ENCODE measurements at regions of chr9 and their contacts with region 1.

Region 1: GRCh38 chr9:121322037-121322775 is 47.8 kb downstream of the STOM start:
- DNase-seq: no peak
- ATAC-seq: no peak

Region 2: DNA sequence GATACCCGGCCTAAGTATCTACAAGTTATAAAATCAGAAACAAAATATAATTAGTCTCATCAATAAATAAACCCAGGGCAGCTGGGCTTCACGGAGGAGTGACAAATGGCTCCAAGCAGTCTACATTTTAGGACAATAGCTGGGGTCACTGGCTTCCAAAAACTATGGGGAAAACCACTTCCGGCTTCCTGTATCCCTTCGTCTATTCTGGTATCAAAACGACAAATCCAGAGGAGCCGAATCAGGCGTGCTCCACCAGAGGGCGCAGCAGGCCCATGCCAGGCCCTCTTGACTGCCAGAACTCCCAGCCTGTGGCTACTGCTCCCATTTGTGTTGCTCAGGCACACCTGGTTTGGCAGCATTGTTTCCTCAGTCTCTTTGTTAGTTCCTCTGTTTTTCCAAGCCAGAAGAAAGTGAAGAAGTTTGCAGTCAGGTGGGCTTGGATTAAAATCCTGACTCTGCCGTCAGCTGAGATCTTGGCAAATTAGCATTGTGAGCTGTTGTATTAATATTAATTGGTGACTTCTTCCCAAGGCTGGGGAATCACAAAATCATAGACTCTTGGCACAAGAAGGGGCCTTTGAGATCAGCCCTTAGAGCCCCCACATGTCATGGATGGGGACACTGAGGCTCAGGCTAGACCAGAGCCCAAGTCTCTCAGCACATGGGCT is 108.9 kb before region 1 on chr9:
- intact Hi-C with region 1: loop called (anchors 5 to 10 kb)
- DNase-seq: peak; percentile 89
- ATAC-seq: peak; percentile 95 to 97

Region 3: DNA sequence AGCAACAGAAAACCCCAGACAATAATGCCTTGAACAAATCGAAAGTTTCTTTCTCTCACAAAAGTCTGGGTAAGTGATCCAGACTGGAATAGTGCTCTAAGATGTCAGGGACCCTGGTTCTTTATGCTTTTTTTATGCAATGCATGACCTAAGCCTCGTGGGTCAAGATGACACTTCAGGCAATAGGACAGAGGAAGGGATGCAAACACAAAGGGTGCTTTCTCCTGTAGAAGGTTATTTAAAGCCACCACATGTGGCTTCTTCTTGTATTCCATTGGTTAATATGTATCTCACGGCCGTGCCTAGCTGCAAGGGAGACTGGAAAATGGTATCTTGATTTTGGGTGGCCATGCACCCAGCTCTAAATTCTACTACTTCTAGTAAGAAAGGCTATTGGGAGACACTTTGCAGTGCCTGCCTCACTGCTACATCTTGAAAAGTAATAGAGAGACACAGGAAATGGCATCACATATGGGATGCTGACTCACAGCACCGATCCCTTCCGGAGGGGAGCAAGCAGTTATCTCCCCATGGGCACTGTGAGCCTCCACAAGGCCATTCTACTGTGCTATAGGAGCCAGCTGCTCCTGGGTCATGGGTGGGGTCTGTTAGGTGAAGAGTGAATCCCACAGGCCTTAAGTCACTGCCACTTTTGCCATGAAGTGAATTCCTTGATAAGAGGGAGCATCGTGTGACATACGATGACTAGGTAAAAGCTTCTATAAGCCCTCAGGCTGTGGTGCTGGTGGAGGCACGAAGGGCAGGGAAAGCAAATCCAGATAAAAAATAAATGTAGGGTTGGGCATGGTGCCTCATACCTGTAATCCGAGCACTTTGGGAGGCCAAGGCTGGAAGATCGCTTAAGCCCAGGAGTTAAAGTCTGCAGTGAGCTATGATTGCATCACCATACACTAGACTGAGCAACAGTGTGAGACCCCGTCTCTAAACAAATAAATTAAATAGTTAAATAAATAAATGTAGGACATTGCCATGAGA is 88.0 kb before region 1 on chr9:
- intact Hi-C with region 1: loop called in 1 of 2 experiments (anchors 5 kb)
- DNase-seq: no peak
- ATAC-seq: no peak

Region 4: GRCh38 chr9:121286973-121287741 is 35.0 kb before region 1 on chr9:
- intact Hi-C with region 1: loop called in 1 of 2 experiments (anchors 5 kb)
- DNase-seq: peak; percentile 88
- ATAC-seq: peak; percentile 74 to 75

Region 5: GRCh38 chr9:121376214-121376830 is 54.1 kb after region 1 on chr9:
- intact Hi-C with region 1: loop called (anchors 2 to 5 kb)
- DNase-seq: no peak
- ATAC-seq: no peak

Region 6: GRCh38 chr9:121383715-121384114 is 61.5 kb after region 1 on chr9:
- intact Hi-C with region 1: loop called in 1 of 2 experiments (anchors 5 kb)
- DNase-seq: no peak
- ATAC-seq: no peak

Measured in left cardiac atrium (tissue), 4 donors.